ENCODE measurements at regions of chr1 and their contacts with region 1.

Region 1: GRCh38 chr1:180631766-180632325 is at the start of gene XPR1:
- DNase-seq: peak; percentile 99
- H3K4me3 Mint-ChIP-seq: no peak within 1 kb of the TSS
- H3K27ac Mint-ChIP-seq: peak within 1 kb of the TSS; percentile 82
- H3K4me1 Mint-ChIP-seq: peaks cover 5% of the 10 kb centered on the region
- H3K27me3 Mint-ChIP-seq: no peaks in the 10 kb centered on the region
- total RNA-seq, gene XPR1: 17.9 to 18.4 TPM

Region 2: DNA sequence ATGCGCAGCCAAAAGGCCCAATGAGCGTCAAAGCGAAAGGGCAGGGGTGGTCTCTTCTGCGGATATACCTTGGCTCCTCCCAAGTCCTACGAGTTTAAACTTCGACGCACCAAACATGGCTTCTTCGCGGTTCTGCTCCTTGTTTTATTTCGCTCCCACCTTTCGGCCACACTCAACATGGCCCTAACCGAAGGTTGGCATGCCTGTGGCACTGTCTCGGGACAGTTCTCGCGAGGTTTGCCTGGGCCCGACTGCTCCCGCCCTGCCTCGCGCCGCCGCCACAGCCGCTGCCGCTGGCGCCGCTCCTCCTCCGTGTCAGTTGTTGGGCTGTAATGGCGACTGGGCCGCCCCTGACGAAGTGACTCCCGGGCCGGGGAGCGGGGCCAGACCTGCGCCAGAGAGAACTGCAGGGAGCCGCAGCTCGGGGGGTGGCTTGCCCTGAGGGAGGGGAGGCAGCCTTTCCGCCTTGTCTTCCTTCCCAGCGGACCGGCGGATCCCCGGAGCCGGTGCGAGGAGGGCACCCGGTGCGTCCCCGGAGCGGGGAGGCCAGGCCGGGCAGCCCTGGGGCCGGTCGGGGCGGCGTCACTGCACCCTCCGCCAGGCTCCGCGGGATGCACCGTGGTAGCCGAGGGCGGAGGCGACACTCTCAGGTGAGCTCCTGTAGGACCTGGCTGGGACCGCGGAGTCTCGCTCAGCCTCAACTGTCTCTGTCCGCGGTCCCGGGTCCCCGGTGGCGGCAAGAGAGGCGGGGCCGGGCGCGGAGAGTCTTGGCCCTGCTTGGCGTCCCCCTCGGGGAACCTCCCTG is 677.2 kb before region 1 on chr1 and contains the start of gene CEP350:
- CTCF ChIA-PET with region 1: no interaction called
- POLR2A ChIA-PET with region 1: no interaction called
- intact Hi-C with region 1: no loop called
- DNase-seq: peak; percentile 99
- H3K4me3 Mint-ChIP-seq: peak within 1 kb of the TSS; percentile 80
- H3K27ac Mint-ChIP-seq: peak within 1 kb of the TSS; percentile 95
- H3K4me1 Mint-ChIP-seq: peaks cover 42% of the 10 kb centered on the region
- H3K27me3 Mint-ChIP-seq: no peaks in the 10 kb centered on the region
- total RNA-seq, gene CEP350: 31.7 to 34.2 TPM

Region 3: DNA sequence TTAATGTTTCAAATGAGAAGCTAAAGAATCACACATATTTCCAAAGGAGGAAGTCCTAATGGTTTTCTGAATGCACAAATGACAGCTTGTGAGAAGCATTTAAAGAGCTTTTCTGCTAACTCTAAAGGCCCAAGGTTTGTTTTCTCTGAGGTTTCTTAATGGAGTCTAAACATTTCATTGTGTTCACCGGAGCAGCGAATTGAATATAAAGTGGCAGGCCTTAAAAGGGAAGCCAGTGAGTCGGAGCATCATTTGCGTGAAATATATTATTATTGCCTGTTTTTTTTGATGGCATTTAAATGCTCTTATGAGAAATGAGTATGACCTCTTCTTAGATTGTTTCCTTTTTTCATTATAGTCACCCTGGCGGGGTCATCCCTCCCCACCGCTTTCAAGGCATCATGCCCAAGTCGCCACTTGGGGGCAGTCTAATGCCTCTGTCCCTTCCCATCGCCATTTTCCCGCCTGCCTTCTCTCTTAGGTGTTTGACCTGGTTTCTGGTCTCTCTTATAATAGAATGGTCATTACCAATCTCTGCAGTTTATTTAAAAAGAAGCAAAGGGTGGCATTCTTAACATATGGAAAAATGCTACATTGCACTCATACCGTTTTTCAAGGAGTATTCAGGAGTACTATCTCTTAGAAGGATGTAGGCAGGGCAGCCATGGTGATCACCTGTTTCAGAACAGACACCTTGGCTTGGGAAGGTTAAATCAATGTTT is 98.4 kb before region 1 on chr1:
- CTCF ChIA-PET with region 1: no interaction called
- POLR2A ChIA-PET with region 1: no interaction called
- intact Hi-C with region 1: loop called (anchors 1 kb)
- DNase-seq: peak; percentile 81
- H3K4me3 Mint-ChIP-seq: no peak overlapping the region
- H3K27ac Mint-ChIP-seq: no peak overlapping the region
- H3K4me1 Mint-ChIP-seq: no peaks in the 10 kb centered on the region
- H3K27me3 Mint-ChIP-seq: peaks cover 8% of the 10 kb centered on the region

Region 4: GRCh38 chr1:180743868-180744267 is 112.0 kb after region 1 on chr1:
- CTCF ChIA-PET with region 1: no interaction called
- POLR2A ChIA-PET with region 1: no interaction called
- intact Hi-C with region 1: no loop called
- DNase-seq: no peak
- H3K4me3 Mint-ChIP-seq: no peak overlapping the region
- H3K27ac Mint-ChIP-seq: no peak overlapping the region
- H3K4me1 Mint-ChIP-seq: no peaks in the 10 kb centered on the region
- H3K27me3 Mint-ChIP-seq: no peaks in the 10 kb centered on the region

Region 5: GRCh38 chr1:180791806-180792205 is 160.0 kb after region 1 on chr1:
- CTCF ChIA-PET with region 1: no interaction called
- POLR2A ChIA-PET with region 1: no interaction called
- intact Hi-C with region 1: no loop called
- DNase-seq: no peak
- H3K4me3 Mint-ChIP-seq: no peak overlapping the region
- H3K27ac Mint-ChIP-seq: no peak overlapping the region
- H3K4me1 Mint-ChIP-seq: peaks cover 7% of the 10 kb centered on the region
- H3K27me3 Mint-ChIP-seq: no peaks in the 10 kb centered on the region

Region 6: GRCh38 chr1:180863158-180863775 is 231.4 kb after region 1 on chr1:
- CTCF ChIA-PET with region 1: interaction called, 20 read pairs
- POLR2A ChIA-PET with region 1: no interaction called
- intact Hi-C with region 1: loop called (anchors 5 kb)
- DNase-seq: no peak
- H3K4me3 Mint-ChIP-seq: no peak overlapping the region
- H3K27ac Mint-ChIP-seq: no peak overlapping the region
- H3K4me1 Mint-ChIP-seq: no peaks in the 10 kb centered on the region
- H3K27me3 Mint-ChIP-seq: no peaks in the 10 kb centered on the region

Region 7: GRCh38 chr1:181021811-181022434 is 390.1 kb after region 1 on chr1:
- CTCF ChIA-PET with region 1: no interaction called
- POLR2A ChIA-PET with region 1: no interaction called
- intact Hi-C with region 1: loop called (anchors 5 kb)
- DNase-seq: peak; percentile 84
- H3K4me3 Mint-ChIP-seq: peak overlapping the region; percentile 94
- H3K27ac Mint-ChIP-seq: peak overlapping the region; percentile 97
- H3K4me1 Mint-ChIP-seq: peaks cover 37% of the 10 kb centered on the region
- H3K27me3 Mint-ChIP-seq: no peaks in the 10 kb centered on the region

Region 8: DNA sequence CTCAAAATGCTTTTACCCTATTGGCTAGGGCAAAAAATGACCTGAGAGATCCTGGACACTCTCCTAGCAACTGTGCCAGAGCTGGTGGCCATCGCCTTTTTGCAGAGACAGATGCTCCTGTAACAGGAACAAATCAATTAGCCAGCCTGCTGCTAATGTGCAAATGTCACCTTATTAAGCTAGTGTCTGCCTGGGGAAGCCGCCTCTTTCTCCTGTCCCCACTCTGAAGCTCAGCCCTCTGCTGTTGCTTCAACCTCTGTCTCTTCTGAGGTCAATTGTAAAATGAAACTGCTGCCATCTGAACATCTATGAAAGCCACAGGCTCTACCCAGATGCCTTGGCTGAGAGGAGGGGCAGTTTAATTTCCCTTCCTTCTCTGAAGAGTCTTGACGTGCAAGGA is 766.0 kb after region 1 on chr1:
- CTCF ChIA-PET with region 1: no interaction called
- POLR2A ChIA-PET with region 1: no interaction called
- intact Hi-C with region 1: loop called (anchors 5 kb)
- DNase-seq: peak; percentile 39
- H3K4me3 Mint-ChIP-seq: no peak overlapping the region
- H3K27ac Mint-ChIP-seq: peak overlapping the region; percentile 53
- H3K4me1 Mint-ChIP-seq: peaks cover 38% of the 10 kb centered on the region
- H3K27me3 Mint-ChIP-seq: no peaks in the 10 kb centered on the region

Measured in activated CD4-positive, alpha-beta memory T cell treated with anti-CD3 and anti-CD28 coated beads for 36 hours (primary cell).